ENCODE measurements at regions of chr20 and their contacts with region 1.

Region 1: DNA sequence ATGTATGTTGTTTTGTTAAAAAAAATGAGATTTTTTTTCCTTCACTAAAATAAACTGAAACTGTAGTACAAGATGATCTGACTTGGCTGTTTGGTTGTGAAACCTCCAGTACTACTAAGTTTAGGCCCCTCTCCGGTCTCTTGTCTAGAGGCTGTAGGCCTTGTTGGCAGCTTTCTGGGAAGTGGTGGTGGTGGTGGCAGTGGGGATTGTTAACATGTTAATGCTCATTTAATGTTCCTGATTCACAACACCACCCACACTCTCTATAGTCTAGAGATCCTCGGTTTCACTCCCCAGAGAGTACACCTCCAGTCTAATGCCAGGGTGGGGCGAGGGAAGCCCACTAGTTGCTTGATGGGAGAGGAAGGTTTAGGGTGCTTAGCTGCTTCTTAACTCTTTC is 24.1 kb downstream of the STK4 start:
- DNase-seq: no peak
- H3K4me3 ChIP-seq: no peak overlapping the region
- H3K27ac ChIP-seq: no peak overlapping the region
- H3K4me1 ChIP-seq: peaks cover 12% of the 10 kb centered on the region; the same call in 1 of the 2 replicates
- H3K27me3 ChIP-seq: no peaks in the 10 kb centered on the region
- CTCF ChIP-seq: no peak

Region 2: GRCh38 chr20:44776977-44777376 is 213.4 kb before region 1 on chr20:
- CTCF ChIA-PET with region 1: no interaction called
- POLR2A ChIA-PET with region 1: interaction called, 14 read pairs
- intact Hi-C with region 1: no loop called
- DNase-seq: peak in 1 of 2 experiments; percentile 20
- H3K4me3 ChIP-seq: no peak overlapping the region
- H3K27ac ChIP-seq: no peak overlapping the region
- H3K4me1 ChIP-seq: no peaks in the 10 kb centered on the region
- H3K27me3 ChIP-seq: peaks cover 55% of the 10 kb centered on the region
- CTCF ChIP-seq: no peak